ENCODE measurements at regions of chr12 and their contacts with region 1.

Region 1: GRCh38 chr12:126355346-126355745 is 1290.1 kb downstream of the AACS start:
- DNase-seq: no peak
- ATAC-seq: peak; percentile 83
- H3K4me3 ChIP-seq: no peak overlapping the region
- H3K4me3 Mint-ChIP-seq: no peak overlapping the region
- H3K27ac ChIP-seq: no peak overlapping the region
- H3K27ac Mint-ChIP-seq: peak overlapping the region; percentile 81
- H3K4me1 ChIP-seq: no peaks in the 10 kb centered on the region
- H3K4me1 Mint-ChIP-seq: peaks cover 12% of the 10 kb centered on the region
- H3K27me3 ChIP-seq: no peaks in the 10 kb centered on the region
- H3K27me3 Mint-ChIP-seq: no peaks in the 10 kb centered on the region
- CTCF ChIP-seq: no peak

Region 2: GRCh38 chr12:126309278-126309677 is 46.1 kb before region 1 on chr12:
- CTCF ChIA-PET with region 1: no interaction called
- POLR2A ChIA-PET with region 1: no interaction called
- intact Hi-C with region 1: loop called in 1 of 2 experiments (anchors 5 kb)
- DNase-seq: no peak
- ATAC-seq: no peak
- H3K4me3 ChIP-seq: no peak overlapping the region
- H3K4me3 Mint-ChIP-seq: no peak overlapping the region
- H3K27ac ChIP-seq: no peak overlapping the region
- H3K27ac Mint-ChIP-seq: no peak overlapping the region
- H3K4me1 ChIP-seq: no peaks in the 10 kb centered on the region
- H3K4me1 Mint-ChIP-seq: no peaks in the 10 kb centered on the region
- H3K27me3 ChIP-seq: no peaks in the 10 kb centered on the region
- H3K27me3 Mint-ChIP-seq: no peaks in the 10 kb centered on the region
- CTCF ChIP-seq: no peak

Region 3: GRCh38 chr12:126768517-126768916 is 413.2 kb after region 1 on chr12:
- CTCF ChIA-PET with region 1: no interaction called
- POLR2A ChIA-PET with region 1: no interaction called
- intact Hi-C with region 1: no loop called
- DNase-seq: peak in 3 of 14 experiments; percentile 46 to 84 (median 63)
- ATAC-seq: peak; percentile 42
- H3K4me3 ChIP-seq: no peak overlapping the region
- H3K4me3 Mint-ChIP-seq: peak overlapping the region; percentile 55
- H3K27ac ChIP-seq: peak overlapping the region in 1 of 2 donors; percentile 7
- H3K27ac Mint-ChIP-seq: peak overlapping the region; percentile 79
- H3K4me1 ChIP-seq: peaks cover 31% of the 10 kb centered on the region
- H3K4me1 Mint-ChIP-seq: peaks cover 31% of the 10 kb centered on the region
- H3K27me3 ChIP-seq: no peaks in the 10 kb centered on the region
- H3K27me3 Mint-ChIP-seq: no peaks in the 10 kb centered on the region
- CTCF ChIP-seq: no peak